ENCODE measurements at regions of chr1 and their contacts with region 1.

Region 1: DNA sequence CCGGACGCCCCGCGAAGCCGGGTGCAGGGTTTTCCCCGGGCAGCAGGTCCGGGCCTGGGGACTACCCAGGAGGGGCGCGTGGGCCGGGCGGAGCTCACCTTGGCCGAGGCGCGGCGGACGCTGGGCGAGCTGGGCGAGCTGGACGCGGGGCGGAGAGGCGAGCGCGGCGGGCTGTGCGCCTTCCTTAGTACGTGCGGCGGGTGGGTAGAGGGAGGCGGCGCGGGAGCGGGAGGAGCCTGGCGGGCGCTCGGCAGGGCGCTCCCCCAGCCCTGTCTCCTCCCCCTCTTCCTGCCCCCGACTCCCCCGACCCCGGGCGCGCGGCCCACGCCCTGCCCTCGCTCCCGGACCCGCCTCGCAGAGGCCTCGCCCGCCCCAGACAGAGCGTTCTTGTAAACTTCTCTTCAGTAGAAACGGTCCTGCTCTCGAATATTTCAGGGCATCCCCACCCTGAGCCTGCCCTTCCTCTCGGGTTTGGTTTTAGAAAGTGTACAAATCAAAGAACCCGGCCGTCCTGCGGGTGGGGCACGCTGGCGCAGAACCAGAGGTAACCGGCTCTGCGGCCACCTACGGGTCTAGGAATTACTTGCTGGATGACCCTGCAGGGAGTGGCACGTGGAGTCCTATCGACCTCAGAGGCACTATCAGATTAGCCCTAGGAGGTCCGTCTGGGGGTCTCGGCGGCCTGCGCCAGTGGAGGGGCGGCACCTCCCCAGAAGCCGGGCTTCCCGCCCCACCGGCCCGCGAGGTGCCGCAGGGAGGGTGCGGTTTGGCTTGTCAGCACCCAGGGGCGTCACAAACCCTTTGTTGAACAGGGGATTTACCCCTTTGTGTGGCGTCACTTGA is at the start of gene S100A10:
- DNase-seq: peak; percentile 68
- ATAC-seq: peak; percentile 65
- H3K4me3 ChIP-seq: peak within 1 kb of the TSS; percentile 89
- H3K27ac ChIP-seq: peak within 1 kb of the TSS; percentile 93
- H3K4me1 ChIP-seq: peaks cover 22% of the 10 kb centered on the region
- H3K27me3 ChIP-seq: no peaks in the 10 kb centered on the region
- CTCF ChIP-seq: no peak
- POLR2A ChIP-seq: peak; percentile 69
- RAD21 ChIP-seq: no peak
- total RNA-seq, gene S100A10: 77.2 and 86.0 TPM in 2 replicates

Region 2: GRCh38 chr1:151311589-151312331 is 682.1 kb before region 1 on chr1:
- CTCF ChIA-PET with region 1: no interaction called
- POLR2A ChIA-PET with region 1: no interaction called
- dilution Hi-C with region 1: no loop called
- in situ Hi-C with region 1: loop called (anchors 25 kb)
- intact Hi-C with region 1: no loop called
- DNase-seq: peak; percentile 100
- ATAC-seq: peak; percentile 89
- H3K4me3 ChIP-seq: no peak overlapping the region
- H3K27ac ChIP-seq: peak overlapping the region; percentile 68
- H3K4me1 ChIP-seq: peaks cover 39% of the 10 kb centered on the region
- H3K27me3 ChIP-seq: no peaks in the 10 kb centered on the region
- CTCF ChIP-seq: no peak
- POLR2A ChIP-seq: 0 out of 2 replicates have a peak, but pooled peaks have one; percentile 44
- RAD21 ChIP-seq: no peak; the same call in 1 of the 2 replicates

Region 3: DNA sequence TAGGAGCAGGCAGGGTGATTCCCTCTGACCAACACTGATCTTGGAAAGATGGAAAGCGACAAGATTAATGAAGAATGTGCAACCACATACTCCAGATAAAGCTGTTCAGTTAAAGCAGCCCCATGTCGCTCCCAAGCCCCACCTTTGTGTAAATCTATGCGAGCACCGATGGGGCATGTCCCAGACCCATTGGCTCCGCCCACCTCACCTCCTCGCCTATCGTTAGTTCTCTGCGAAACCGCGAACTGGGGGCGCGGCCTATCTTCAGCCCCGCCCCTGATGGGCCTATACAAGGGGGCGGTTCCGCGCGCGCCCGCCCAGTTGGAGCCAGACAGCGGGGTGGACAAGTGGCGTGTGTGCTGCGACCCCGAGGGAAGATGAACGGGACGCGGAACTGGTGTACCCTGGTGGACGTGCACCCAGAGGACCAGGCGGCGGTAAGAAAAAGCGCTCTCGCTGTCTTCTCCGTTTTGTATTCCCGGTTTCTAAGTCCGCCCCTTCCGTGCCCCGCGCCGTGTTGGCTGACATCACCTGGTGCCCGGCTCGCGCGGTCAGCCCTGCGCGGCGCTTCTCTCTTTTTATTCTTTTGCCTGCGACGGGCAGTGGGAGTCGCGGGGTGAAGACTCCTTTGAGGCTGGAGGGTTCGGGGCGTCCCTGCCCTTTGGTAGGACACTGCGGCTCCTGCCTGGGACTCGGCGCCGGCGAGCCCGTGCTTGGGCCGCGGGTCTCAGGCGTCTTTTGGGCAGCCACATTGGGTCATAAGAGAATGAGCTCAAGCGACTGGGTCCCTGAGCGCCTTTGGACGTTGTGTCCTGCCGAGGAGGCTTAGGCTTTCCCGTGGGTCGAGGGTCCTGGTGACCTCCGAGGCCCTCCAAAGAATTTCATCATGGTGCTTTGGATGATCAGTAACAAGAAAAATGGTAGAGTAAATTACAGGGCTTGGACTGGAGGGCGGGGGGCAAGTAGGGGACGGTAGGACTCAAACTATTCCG is 453.6 kb before region 1 on chr1 and contains the start of gene TUFT1:
- CTCF ChIA-PET with region 1: no interaction called
- POLR2A ChIA-PET with region 1: no interaction called
- dilution Hi-C with region 1: no loop called
- in situ Hi-C with region 1: loop called (anchors 10 kb)
- intact Hi-C with region 1: no loop called
- DNase-seq: peak; percentile 89
- ATAC-seq: peak; percentile 86
- H3K4me3 ChIP-seq: peak within 1 kb of the TSS; percentile 73
- H3K27ac ChIP-seq: peak within 1 kb of the TSS; percentile 35
- H3K4me1 ChIP-seq: peaks cover 28% of the 10 kb centered on the region
- H3K27me3 ChIP-seq: no peaks in the 10 kb centered on the region
- CTCF ChIP-seq: no peak
- POLR2A ChIP-seq: peak; percentile 98
- RAD21 ChIP-seq: no peak
- total RNA-seq, gene TUFT1: 30.3 and 33.3 TPM in 2 replicates

Region 4: GRCh38 chr1:151888972-151889570 is 104.8 kb before region 1 on chr1:
- CTCF ChIA-PET with region 1: no interaction called
- POLR2A ChIA-PET with region 1: no interaction called
- dilution Hi-C with region 1: no loop called
- in situ Hi-C with region 1: no loop called
- intact Hi-C with region 1: loop called (anchors 2 kb)
- DNase-seq: no peak
- ATAC-seq: no peak
- H3K4me3 ChIP-seq: no peak overlapping the region
- H3K27ac ChIP-seq: no peak overlapping the region
- H3K4me1 ChIP-seq: peaks cover 2% of the 10 kb centered on the region
- H3K27me3 ChIP-seq: no peaks in the 10 kb centered on the region
- CTCF ChIP-seq: peak; percentile 45
- POLR2A ChIP-seq: no peak
- RAD21 ChIP-seq: peak; percentile 33

Region 5: GRCh38 chr1:151934048-151934493 is 59.8 kb before region 1 on chr1:
- CTCF ChIA-PET with region 1: interaction called, 5 read pairs
- POLR2A ChIA-PET with region 1: no interaction called
- dilution Hi-C with region 1: no loop called
- in situ Hi-C with region 1: loop called (anchors 5 kb)
- intact Hi-C with region 1: loop called (anchors 1 kb)
- DNase-seq: peak; percentile 60
- ATAC-seq: peak; percentile 96
- H3K4me3 ChIP-seq: no peak overlapping the region
- H3K27ac ChIP-seq: no peak overlapping the region
- H3K4me1 ChIP-seq: no peaks in the 10 kb centered on the region
- H3K27me3 ChIP-seq: peaks cover 7% of the 10 kb centered on the region
- CTCF ChIP-seq: peak; percentile 93
- POLR2A ChIP-seq: no peak
- RAD21 ChIP-seq: peak; percentile 96

Region 6: GRCh38 chr1:151968058-151968457 is 25.8 kb before region 1 on chr1:
- CTCF ChIA-PET with region 1: interaction called, 67 read pairs
- POLR2A ChIA-PET with region 1: no interaction called
- dilution Hi-C with region 1: no loop called
- in situ Hi-C with region 1: no loop called
- intact Hi-C with region 1: loop called (anchors 1 kb)
- DNase-seq: peak; percentile 41
- ATAC-seq: peak; percentile 77
- H3K4me3 ChIP-seq: no peak overlapping the region
- H3K27ac ChIP-seq: no peak overlapping the region
- H3K4me1 ChIP-seq: no peaks in the 10 kb centered on the region; the same call in 1 of the 2 replicates
- H3K27me3 ChIP-seq: no peaks in the 10 kb centered on the region
- CTCF ChIP-seq: peak; percentile 86
- POLR2A ChIP-seq: no peak
- RAD21 ChIP-seq: peak; percentile 87